ENCODE measurements at regions of chr3 and their contacts with region 1.

Region 1: DNA sequence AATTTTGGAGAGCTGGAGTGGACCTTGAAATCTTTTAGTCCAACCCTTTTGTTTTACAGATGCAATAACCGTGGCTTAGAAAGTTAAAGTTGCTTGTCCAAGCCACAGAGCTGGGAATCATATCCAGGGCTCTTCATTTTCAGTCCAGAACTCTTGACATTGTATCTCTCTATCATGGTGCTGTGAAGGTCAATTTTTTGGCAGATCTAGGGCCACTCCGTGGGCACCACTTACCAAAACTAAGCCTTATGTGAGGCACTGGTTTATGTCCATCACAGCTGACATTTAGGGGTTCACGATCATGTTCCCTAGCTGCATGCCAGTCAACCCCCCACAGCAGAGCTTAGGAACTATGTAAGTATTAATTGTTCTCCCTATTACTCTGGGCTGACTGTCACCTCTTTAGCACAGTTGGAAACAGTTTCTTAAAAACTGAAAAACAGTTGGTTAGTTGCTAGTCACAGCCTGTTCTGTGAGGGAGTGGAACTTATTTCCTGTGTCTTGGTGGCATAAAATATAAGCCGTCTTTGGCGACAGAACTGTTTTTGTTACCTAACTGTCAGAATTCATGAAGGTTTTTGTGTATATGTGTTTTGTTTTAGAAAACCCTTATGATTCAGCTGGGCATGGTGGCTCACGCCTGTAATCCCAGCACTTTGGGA is 189.6 kb upstream of the UMPS start:
- DNase-seq: no peak
- ATAC-seq: no peak
- H3K4me3 Mint-ChIP-seq: no peak overlapping the region
- H3K27ac Mint-ChIP-seq: no peak overlapping the region
- H3K4me1 Mint-ChIP-seq: no peaks in the 10 kb centered on the region
- H3K27me3 Mint-ChIP-seq: peaks cover 29% of the 10 kb centered on the region

Region 2: GRCh38 chr3:124520970-124521369 is 19.7 kb before region 1 on chr3:
- CTCF ChIA-PET with region 1: no interaction called
- DNase-seq: no peak
- ATAC-seq: no peak
- H3K4me3 Mint-ChIP-seq: no peak overlapping the region
- H3K27ac Mint-ChIP-seq: no peak overlapping the region
- H3K4me1 Mint-ChIP-seq: no peaks in the 10 kb centered on the region
- H3K27me3 Mint-ChIP-seq: peaks cover 38% of the 10 kb centered on the region

Region 3: GRCh38 chr3:124552239-124552638 is 11.6 kb after region 1 on chr3:
- CTCF ChIA-PET with region 1: interaction called, 21 read pairs
- DNase-seq: no peak
- ATAC-seq: no peak
- H3K4me3 Mint-ChIP-seq: no peak overlapping the region
- H3K27ac Mint-ChIP-seq: no peak overlapping the region
- H3K4me1 Mint-ChIP-seq: peaks cover 14% of the 10 kb centered on the region
- H3K27me3 Mint-ChIP-seq: peaks cover 77% of the 10 kb centered on the region

Region 4: DNA sequence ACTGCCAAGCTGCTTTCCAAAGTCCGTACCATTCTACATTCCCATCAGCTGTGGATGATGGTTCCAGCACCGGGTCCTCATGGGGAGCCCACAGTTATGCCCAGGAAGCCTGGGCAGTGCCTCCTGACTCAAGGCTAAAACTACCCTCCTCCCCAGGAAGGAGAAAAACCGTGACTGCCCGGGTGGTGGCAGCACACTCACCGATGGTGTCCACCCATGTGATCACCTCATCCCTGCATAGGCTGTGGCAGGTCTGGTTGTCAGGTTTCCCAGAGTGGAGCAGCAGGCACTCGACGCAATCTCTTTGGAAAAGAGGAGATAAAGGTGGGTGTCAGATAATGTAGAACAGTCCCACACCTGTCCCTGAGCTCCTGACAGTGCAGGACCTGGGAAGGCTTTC is 228.1 kb after region 1 on chr3:
- CTCF ChIA-PET with region 1: no interaction called
- DNase-seq: no peak
- ATAC-seq: no peak
- H3K4me3 Mint-ChIP-seq: no peak overlapping the region
- H3K27ac Mint-ChIP-seq: no peak overlapping the region
- H3K4me1 Mint-ChIP-seq: no peaks in the 10 kb centered on the region
- H3K27me3 Mint-ChIP-seq: peaks cover 31% of the 10 kb centered on the region

Region 5: DNA sequence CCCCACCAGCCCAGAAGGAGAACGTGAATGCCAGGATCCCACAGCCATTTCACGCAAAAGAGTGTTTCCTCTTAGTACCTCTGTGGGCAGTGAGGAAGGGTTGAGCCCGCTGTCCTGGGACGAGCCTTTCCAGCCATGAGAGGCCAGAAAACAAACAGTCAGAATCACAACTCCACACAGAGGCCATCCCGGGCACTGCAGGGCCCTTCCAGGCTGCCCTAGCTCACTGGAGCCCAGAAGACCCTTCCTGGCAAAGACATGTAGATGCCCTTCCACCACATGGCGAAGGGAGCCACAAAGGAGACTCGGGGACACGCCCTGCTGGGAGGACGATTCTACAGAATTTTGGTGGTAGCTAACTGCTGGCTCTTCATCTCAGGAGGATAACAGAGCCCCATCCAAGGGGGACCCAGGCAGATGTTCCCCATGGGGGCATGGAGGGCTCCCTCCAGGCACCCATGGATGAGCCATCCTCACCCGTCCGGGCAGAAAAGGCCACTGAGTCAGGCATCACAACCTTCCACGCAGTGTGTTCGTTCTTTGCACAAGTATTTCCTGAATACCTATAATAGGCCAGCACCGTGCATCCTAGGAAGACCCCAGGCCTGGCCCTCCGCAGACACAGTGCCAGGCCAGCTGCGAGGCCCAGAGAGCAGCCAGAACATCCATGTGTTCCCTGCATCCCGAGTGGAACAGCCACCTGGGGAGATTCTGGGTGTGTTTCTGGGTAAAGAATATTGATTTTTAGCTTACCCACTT is 624.7 kb after region 1 on chr3:
- CTCF ChIA-PET with region 1: no interaction called
- DNase-seq: no peak
- ATAC-seq: no peak
- H3K4me3 Mint-ChIP-seq: no peak overlapping the region
- H3K27ac Mint-ChIP-seq: no peak overlapping the region
- H3K4me1 Mint-ChIP-seq: peaks cover 2% of the 10 kb centered on the region
- H3K27me3 Mint-ChIP-seq: peaks cover 37% of the 10 kb centered on the region